ENCODE measurements at regions of chr11 and their contacts with region 1.

Region 1: GRCh38 chr11:46603704-46604308 is 10.0 kb upstream of the AMBRA1 start:
- DNase-seq: no peak
- ATAC-seq: peak; percentile 28
- H3K4me3 Mint-ChIP-seq: no peak overlapping the region
- H3K27ac Mint-ChIP-seq: peak overlapping the region; percentile 62
- H3K4me1 Mint-ChIP-seq: peaks cover 11% of the 10 kb centered on the region
- H3K27me3 Mint-ChIP-seq: no peaks in the 10 kb centered on the region
- CTCF ChIP-seq: no peak

Region 2: GRCh38 chr11:46541593-46542371 is 62.0 kb before region 1 on chr11:
- CTCF ChIA-PET with region 1: no interaction called
- POLR2A ChIA-PET with region 1: no interaction called
- intact Hi-C with region 1: no loop called
- DNase-seq: no peak
- ATAC-seq: no peak
- H3K4me3 Mint-ChIP-seq: no peak overlapping the region
- H3K27ac Mint-ChIP-seq: no peak overlapping the region
- H3K4me1 Mint-ChIP-seq: peaks cover 5% of the 10 kb centered on the region
- H3K27me3 Mint-ChIP-seq: no peaks in the 10 kb centered on the region
- CTCF ChIP-seq: no peak

Region 3: GRCh38 chr11:46593550-46594373 is 10.0 kb before region 1 on chr11 and contains the start of gene AMBRA1:
- CTCF ChIA-PET with region 1: no interaction called
- POLR2A ChIA-PET with region 1: interaction called, 8 read pairs
- intact Hi-C with region 1: loop called (anchors 1 kb)
- DNase-seq: peak; percentile 77
- ATAC-seq: peak; percentile 93
- H3K4me3 Mint-ChIP-seq: peak within 1 kb of the TSS; percentile 97
- H3K27ac Mint-ChIP-seq: peak within 1 kb of the TSS; percentile 88
- H3K4me1 Mint-ChIP-seq: peaks cover 43% of the 10 kb centered on the region
- H3K27me3 Mint-ChIP-seq: no peaks in the 10 kb centered on the region
- CTCF ChIP-seq: no peak
- total RNA-seq, gene AMBRA1: 35.5 and 39.1 TPM in 2 replicates

Region 4: GRCh38 chr11:47317064-47317828 is 713.4 kb after region 1 on chr11:
- CTCF ChIA-PET with region 1: no interaction called
- POLR2A ChIA-PET with region 1: interaction called, 13 read pairs
- intact Hi-C with region 1: no loop called
- DNase-seq: no peak
- ATAC-seq: no peak
- H3K4me3 Mint-ChIP-seq: no peak overlapping the region
- H3K27ac Mint-ChIP-seq: peak overlapping the region; percentile 3
- H3K4me1 Mint-ChIP-seq: peaks cover 14% of the 10 kb centered on the region
- H3K27me3 Mint-ChIP-seq: no peaks in the 10 kb centered on the region
- CTCF ChIP-seq: no peak